Heart left ventricle (tissue), 16 donors: ENCODE measurements at regions of chr3 and their contacts with region 1.

Region 1: DNA sequence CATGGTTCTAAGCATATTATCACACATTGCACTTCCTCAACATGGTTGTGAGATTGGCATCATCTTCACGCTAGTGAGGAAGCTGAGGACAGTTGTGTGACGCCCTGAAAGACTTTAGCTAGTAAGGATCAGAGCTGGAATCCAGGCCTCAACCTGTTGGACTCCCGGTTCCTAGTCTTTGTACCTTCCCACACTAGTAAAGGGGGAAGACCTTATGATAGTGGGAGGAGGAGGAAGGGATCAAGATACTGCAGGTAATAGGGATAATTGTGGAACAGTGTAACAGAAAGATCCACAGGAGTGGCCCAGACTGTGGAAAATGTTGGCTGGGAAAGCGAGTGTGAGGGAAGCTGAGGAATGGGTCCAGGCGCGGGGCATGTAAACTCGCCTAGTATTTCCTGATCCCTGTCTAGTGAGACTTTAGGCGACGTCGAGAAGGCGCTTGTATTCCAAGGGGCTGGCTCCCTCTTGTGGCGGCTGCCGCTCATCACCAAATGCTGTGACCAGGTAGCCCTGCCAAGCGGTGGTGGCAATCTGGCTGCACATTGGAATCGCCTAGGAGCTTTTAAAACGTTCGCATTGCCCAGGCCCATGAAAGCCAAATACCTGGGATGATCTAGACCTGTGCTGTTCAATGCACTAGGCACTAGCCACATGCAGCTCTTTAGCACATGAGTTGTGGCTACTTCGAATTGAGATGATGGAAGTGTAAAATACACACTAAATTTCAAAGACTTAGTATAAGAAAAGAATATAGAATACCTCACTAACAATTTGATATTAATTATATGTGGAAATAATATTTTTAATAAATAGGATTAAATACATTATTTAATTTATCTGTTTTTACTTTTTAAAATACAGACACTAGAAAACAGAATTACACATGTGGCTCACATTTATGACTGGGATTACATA is 38.8 kb upstream of the CLDN18 start:
- DNase-seq: peak; percentile 51 to 83 (median 67)
- ATAC-seq: peak in 3 of 4 donors; percentile 85 to 91 (median 91)
- H3K4me3 ChIP-seq: no peak overlapping the region
- H3K27ac ChIP-seq: no peak overlapping the region
- H3K4me1 ChIP-seq: no peaks in the 10 kb centered on the region
- H3K27me3 ChIP-seq: peaks cover 0 to 10% (median 0%) of the 10 kb centered on the region in 9 donors
- CTCF ChIP-seq: peak; percentile 67 to 88 (median 76)
- POLR2A ChIP-seq: no peak

Region 2: DNA sequence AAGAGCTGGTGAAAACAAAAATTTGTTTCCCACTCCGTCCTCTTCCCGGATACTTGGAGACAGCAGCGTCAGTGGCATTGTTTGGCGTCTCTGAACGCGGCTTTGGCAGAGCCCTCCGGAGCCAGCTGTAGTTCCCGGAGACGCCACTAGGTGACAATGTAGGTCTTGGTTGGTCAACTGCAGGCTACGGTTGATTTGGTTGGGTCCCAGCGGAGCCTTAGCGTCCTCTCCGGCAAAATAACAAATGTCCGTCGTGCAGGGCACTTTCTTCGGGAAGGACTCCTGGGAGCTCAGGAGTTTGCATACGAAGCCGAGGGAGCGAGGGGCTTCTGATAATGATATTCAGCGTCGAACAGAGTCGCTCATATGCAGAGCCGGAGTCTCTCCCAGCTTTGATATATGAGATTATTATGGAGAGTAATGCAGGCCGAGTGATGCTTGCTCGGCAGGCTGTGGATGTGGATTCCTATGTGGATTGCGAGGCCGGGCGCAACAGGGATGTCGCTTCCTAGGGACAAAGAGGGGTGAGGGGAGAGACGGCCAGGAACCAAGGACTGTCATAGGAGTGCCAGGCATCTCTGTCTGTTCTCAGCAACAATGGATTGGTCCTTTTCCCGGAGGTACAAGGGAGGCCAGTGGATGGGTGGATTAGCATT is 938.6 kb before region 1 on chr3:
- intact Hi-C with region 1: loop called in 1 of 10 experiments (anchors 10 kb)
- DNase-seq: peak; percentile 81 to 90 (median 84)
- ATAC-seq: peak; percentile 74 to 94 (median 88)
- H3K4me3 ChIP-seq: peak overlapping the region in 10 of 12 donors; percentile 12 to 54 (median 41)
- H3K27ac ChIP-seq: no peak overlapping the region
- H3K4me1 ChIP-seq: peaks cover 0 to 12% (median 0%) of the 10 kb centered on the region in 12 donors
- H3K27me3 ChIP-seq: peaks cover 0 to 8% (median 3%) of the 10 kb centered on the region in 9 donors
- CTCF ChIP-seq: peak; percentile 96 to 99 (median 97)
- POLR2A ChIP-seq: no peak

Region 3: GRCh38 chr3:138051946-138052802 is 81.0 kb after region 1 on chr3:
- intact Hi-C with region 1: loop called in 2 of 10 experiments (anchors 2 to 5 kb)
- DNase-seq: peak in 1 of 5 donors; percentile 51
- ATAC-seq: peak; percentile 55 to 79 (median 77)
- H3K4me3 ChIP-seq: no peak overlapping the region
- H3K27ac ChIP-seq: no peak overlapping the region
- H3K4me1 ChIP-seq: peaks cover 0 to 18% (median 0%) of the 10 kb centered on the region in 12 donors
- H3K27me3 ChIP-seq: no peaks in the 10 kb centered on the region
- CTCF ChIP-seq: peak; percentile 35 to 67 (median 51)
- POLR2A ChIP-seq: no peak